Activated CD4-positive, alpha-beta T cell treated with anti-CD3 and anti-CD28 coated beads for 36 hours (primary cell): ENCODE measurements at regions of chr22 and their contacts with region 1.

Region 1: GRCh38 chr22:43001271-43002201 is 13.4 kb downstream of the PACSIN2 start:
- DNase-seq: peak; percentile 22
- ATAC-seq: peak; percentile 13
- H3K4me3 Mint-ChIP-seq: no peak overlapping the region
- H3K27ac Mint-ChIP-seq: peak overlapping the region; percentile 30
- H3K4me1 Mint-ChIP-seq: peaks cover 89% of the 10 kb centered on the region
- H3K27me3 Mint-ChIP-seq: no peaks in the 10 kb centered on the region

Region 2: GRCh38 chr22:42856865-42857704 is 144.5 kb before region 1 on chr22 and contains the start of gene ARFGAP3:
- CTCF ChIA-PET with region 1: no interaction called
- POLR2A ChIA-PET with region 1: no interaction called
- intact Hi-C with region 1: loop called in 1 of 2 experiments (anchors 5 kb)
- DNase-seq: peak; percentile 98
- ATAC-seq: peak; percentile 91
- H3K4me3 Mint-ChIP-seq: peak within 1 kb of the TSS; percentile 83
- H3K27ac Mint-ChIP-seq: peak within 1 kb of the TSS; percentile 85
- H3K4me1 Mint-ChIP-seq: peaks cover 11% of the 10 kb centered on the region
- H3K27me3 Mint-ChIP-seq: peaks cover 6% of the 10 kb centered on the region
- total RNA-seq, gene ARFGAP3: 22.5 to 23.0 TPM